Sciatic nerve (tissue), 2 donors: ENCODE measurements at regions of chr17 and their contacts with region 1.

Region 1: DNA sequence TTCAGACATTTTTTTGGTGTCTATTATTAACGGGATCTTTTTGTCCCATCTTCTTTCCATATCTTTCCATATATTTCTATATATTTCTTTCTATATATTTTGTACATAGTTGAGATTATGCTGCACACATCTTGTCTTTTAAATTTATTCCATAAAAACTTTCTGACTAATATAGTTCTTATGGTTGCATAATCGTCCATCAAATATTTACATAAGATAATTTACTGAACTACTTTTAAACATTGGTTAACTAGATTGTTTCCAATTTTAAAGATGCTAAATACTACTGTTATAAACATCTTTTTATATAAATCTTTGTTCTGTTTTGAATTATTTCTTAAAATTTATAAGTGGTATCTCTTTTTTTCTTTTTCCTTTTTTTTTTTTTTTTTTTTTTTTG is 12.1 kb upstream of the TANC2 start:
- DNase-seq: no peak
- ATAC-seq: no peak

Region 2: GRCh38 chr17:62860907-62861848 is 92.7 kb before region 1 on chr17:
- intact Hi-C with region 1: loop called (anchors 2 kb)
- DNase-seq: no peak
- ATAC-seq: no peak